GM12878 (cell line): ENCODE measurements at regions of chr6 and their contacts with region 1.

Region 1: GRCh38 chr6:35669451-35670045 is 19.2 kb downstream of the FKBP5 start:
- DNase-seq: no peak
- ATAC-seq: peak; percentile 79
- H3K4me3 ChIP-seq: peak overlapping the region; percentile 52; the same call in 1 of the 2 replicates
- H3K27ac ChIP-seq: peak overlapping the region; percentile 89
- H3K4me1 ChIP-seq: peaks cover 16% of the 10 kb centered on the region
- H3K27me3 ChIP-seq: no peaks in the 10 kb centered on the region
- CTCF ChIP-seq: no peak
- EP300 ChIP-seq: no peak
- POLR2A ChIP-seq: no peak
- RAD21 ChIP-seq: no peak

Region 2: GRCh38 chr6:35683267-35683666 is 13.7 kb after region 1 on chr6:
- CTCF ChIA-PET with region 1: interaction called, 19 read pairs
- POLR2A ChIA-PET with region 1: interaction called, 40 read pairs
- RAD21 ChIA-PET with region 1: interaction called, 22 read pairs
- SMC1A ChIA-PET with region 1: interaction called, 69 read pairs
- in situ Hi-C with region 1: no loop called
- intact Hi-C with region 1: no loop called
- DNase-seq: no peak
- ATAC-seq: no peak
- H3K4me3 ChIP-seq: no peak overlapping the region
- H3K27ac ChIP-seq: no peak overlapping the region
- H3K4me1 ChIP-seq: peaks cover 6% of the 10 kb centered on the region; the same call in 1 of the 2 replicates
- H3K27me3 ChIP-seq: no peaks in the 10 kb centered on the region
- CTCF ChIP-seq: no peak
- EP300 ChIP-seq: no peak
- POLR2A ChIP-seq: no peak
- RAD21 ChIP-seq: no peak

Region 3: GRCh38 chr6:35698858-35699257 is 29.3 kb after region 1 on chr6:
- CTCF ChIA-PET with region 1: no interaction called
- POLR2A ChIA-PET with region 1: no interaction called
- RAD21 ChIA-PET with region 1: no interaction called
- SMC1A ChIA-PET with region 1: no interaction called
- in situ Hi-C with region 1: no loop called
- intact Hi-C with region 1: no loop called
- DNase-seq: no peak
- ATAC-seq: no peak
- H3K4me3 ChIP-seq: no peak overlapping the region
- H3K27ac ChIP-seq: no peak overlapping the region
- H3K4me1 ChIP-seq: no peaks in the 10 kb centered on the region
- H3K27me3 ChIP-seq: no peaks in the 10 kb centered on the region
- CTCF ChIP-seq: no peak
- EP300 ChIP-seq: no peak
- POLR2A ChIP-seq: no peak
- RAD21 ChIP-seq: no peak

Region 4: DNA sequence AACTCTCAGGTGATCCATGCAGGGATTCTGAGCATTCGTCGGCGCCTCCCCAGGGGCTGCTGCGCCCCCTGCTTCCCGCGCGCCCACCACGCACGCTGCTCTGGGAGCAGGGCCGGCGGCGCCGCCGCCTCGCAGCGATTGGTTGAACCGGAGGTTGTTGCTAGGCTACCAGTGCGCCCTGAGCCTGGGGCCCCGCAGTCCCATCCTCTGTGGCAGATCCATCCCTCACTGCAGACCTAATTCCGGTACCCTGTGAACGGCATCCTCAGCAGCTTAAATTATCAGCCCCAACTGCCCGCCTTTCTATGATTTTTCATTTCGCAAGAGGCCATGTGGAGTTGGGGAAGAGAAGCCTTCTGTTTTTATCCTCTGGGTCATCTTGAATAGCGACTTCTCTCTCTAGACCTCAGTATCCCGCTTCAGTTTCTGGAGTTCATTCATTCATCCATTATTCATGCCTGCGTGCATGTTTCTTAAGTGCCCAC is 615.7 kb after region 1 on chr6:
- CTCF ChIA-PET with region 1: no interaction called
- POLR2A ChIA-PET with region 1: no interaction called
- RAD21 ChIA-PET with region 1: no interaction called
- SMC1A ChIA-PET with region 1: no interaction called
- in situ Hi-C with region 1: no loop called
- intact Hi-C with region 1: no loop called
- DNase-seq: no peak
- ATAC-seq: no peak
- H3K4me3 ChIP-seq: no peak overlapping the region
- H3K27ac ChIP-seq: no peak overlapping the region
- H3K4me1 ChIP-seq: peaks cover 2% of the 10 kb centered on the region; the same call in 1 of the 2 replicates
- H3K27me3 ChIP-seq: peaks cover 0 to 11% of the 10 kb centered on the region in 2 experiments; a peak in 3 of 4 replicates
- CTCF ChIP-seq: no peak
- EP300 ChIP-seq: no peak
- POLR2A ChIP-seq: no peak
- RAD21 ChIP-seq: no peak